CD8-positive, alpha-beta memory T cell (primary cell): ENCODE measurements at regions of chr1 and their contacts with region 1.

Region 1: GRCh38 chr1:61077676-61078541 is 4.5 kb upstream of the NFIA start:
- DNase-seq: peak; percentile 83 to 95 (median 94)
- H3K4me3 ChIP-seq: peak overlapping the region; percentile 61
- H3K4me3 Mint-ChIP-seq: peak overlapping the region; percentile 89 to 98 (median 93)
- H3K27ac ChIP-seq: peak overlapping the region; percentile 83
- H3K27ac Mint-ChIP-seq: peak overlapping the region; percentile 92 to 98 (median 97)
- H3K4me1 ChIP-seq: peaks cover 43% of the 10 kb centered on the region
- H3K4me1 Mint-ChIP-seq: peaks cover 44 to 50% (median 49%) of the 10 kb centered on the region in 3 donors
- H3K27me3 ChIP-seq: no peaks in the 10 kb centered on the region
- H3K27me3 Mint-ChIP-seq: peaks cover 0 to 5% of the 10 kb centered on the region in 2 donors

Region 2: DNA sequence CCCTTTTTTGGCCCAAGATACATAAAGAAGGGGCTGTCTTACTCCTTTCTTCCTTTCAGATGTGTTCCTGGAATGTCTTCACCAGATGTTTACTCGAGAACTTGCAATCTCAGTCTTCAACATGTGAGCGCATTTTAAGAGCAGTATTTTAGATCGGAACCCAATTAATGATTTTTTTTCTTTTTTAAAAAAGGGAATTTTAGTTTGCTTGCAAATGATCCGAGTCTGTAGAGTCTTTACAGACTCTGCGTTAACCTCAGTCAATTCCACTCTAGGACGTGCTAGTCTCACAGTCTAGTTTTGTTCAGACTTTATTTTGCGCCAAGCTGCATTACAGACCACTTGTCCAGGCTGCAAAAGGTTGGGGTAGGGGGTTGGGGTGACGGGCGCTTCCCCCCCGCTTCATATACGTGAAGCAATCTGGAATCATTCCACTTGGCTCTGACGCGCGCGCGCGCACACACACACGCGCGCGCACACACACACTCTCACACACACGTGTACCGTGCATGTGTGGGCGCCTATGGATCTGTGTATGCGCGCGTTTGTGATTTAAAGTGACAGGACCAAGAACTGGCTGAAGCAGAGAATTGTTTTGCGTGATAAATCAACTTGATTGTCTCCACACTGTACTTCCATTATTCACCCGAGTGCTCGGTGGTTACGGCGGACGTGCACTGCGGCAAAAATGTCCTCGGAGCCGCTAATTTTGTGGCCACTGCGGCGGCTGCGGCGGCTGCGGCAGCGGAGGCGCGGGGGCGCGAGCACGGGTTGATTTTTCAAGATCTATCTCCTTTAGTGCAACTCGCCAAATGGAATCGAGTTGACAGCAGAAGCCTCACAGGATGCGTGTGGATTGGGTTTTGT is 21.1 kb before region 1 on chr1:
- CTCF ChIA-PET with region 1: interaction called, 53 read pairs
- POLR2A ChIA-PET with region 1: interaction called, 7 read pairs
- DNase-seq: peak in 4 of 5 donors; percentile 32 to 66 (median 44)
- H3K4me3 ChIP-seq: peak overlapping the region; percentile 68
- H3K4me3 Mint-ChIP-seq: peak overlapping the region; percentile 90 to 97 (median 92)
- H3K27ac ChIP-seq: peak overlapping the region; percentile 54
- H3K27ac Mint-ChIP-seq: peak overlapping the region in 7 of 8 donors; percentile 31 to 86 (median 63)
- H3K4me1 ChIP-seq: peaks cover 10% of the 10 kb centered on the region
- H3K4me1 Mint-ChIP-seq: peaks cover 32 to 45% (median 33%) of the 10 kb centered on the region in 3 donors
- H3K27me3 ChIP-seq: no peaks in the 10 kb centered on the region
- H3K27me3 Mint-ChIP-seq: peaks cover 23% of the 10 kb centered on the region in 2 donors